Activated T-helper 2 cell treated with anti-CD3 and anti-CD28 coated beads, Interferon-gamma antibody, Interleukin-2, Interleukin-4, amounts not matched to agents 10 μg/mL and 5 μg/mL and 100 μg/mL, durations not matched to agents 14 hours and 24 hours and 36 hours (primary cell): ENCODE measurements at regions of chr19 and their contacts with region 1.

Region 1: GRCh38 chr19:54189735-54190502 is 539 bp upstream of the MBOAT7 start:
- DNase-seq: peak; percentile 100
- H3K4me3 Mint-ChIP-seq: peak overlapping the region; percentile 89
- H3K27ac Mint-ChIP-seq: peak overlapping the region; percentile 98
- H3K4me1 Mint-ChIP-seq: peaks cover 26% of the 10 kb centered on the region
- H3K27me3 Mint-ChIP-seq: no peaks in the 10 kb centered on the region

Region 2: GRCh38 chr19:54203151-54203611 is 13.3 kb after region 1 on chr19:
- intact Hi-C with region 1: loop called (anchors 1 kb)
- DNase-seq: no peak
- H3K4me3 Mint-ChIP-seq: peak overlapping the region; percentile 99
- H3K27ac Mint-ChIP-seq: no peak overlapping the region
- H3K4me1 Mint-ChIP-seq: peaks cover 61% of the 10 kb centered on the region
- H3K27me3 Mint-ChIP-seq: no peaks in the 10 kb centered on the region

Region 3: GRCh38 chr19:54403054-54403453 is 213.1 kb after region 1 on chr19:
- intact Hi-C with region 1: no loop called
- DNase-seq: no peak
- H3K4me3 Mint-ChIP-seq: no peak overlapping the region
- H3K27ac Mint-ChIP-seq: no peak overlapping the region
- H3K4me1 Mint-ChIP-seq: no peaks in the 10 kb centered on the region
- H3K27me3 Mint-ChIP-seq: peaks cover 3% of the 10 kb centered on the region